ENCODE measurements at regions of chr2 and their contacts with region 1.

Region 1: DNA sequence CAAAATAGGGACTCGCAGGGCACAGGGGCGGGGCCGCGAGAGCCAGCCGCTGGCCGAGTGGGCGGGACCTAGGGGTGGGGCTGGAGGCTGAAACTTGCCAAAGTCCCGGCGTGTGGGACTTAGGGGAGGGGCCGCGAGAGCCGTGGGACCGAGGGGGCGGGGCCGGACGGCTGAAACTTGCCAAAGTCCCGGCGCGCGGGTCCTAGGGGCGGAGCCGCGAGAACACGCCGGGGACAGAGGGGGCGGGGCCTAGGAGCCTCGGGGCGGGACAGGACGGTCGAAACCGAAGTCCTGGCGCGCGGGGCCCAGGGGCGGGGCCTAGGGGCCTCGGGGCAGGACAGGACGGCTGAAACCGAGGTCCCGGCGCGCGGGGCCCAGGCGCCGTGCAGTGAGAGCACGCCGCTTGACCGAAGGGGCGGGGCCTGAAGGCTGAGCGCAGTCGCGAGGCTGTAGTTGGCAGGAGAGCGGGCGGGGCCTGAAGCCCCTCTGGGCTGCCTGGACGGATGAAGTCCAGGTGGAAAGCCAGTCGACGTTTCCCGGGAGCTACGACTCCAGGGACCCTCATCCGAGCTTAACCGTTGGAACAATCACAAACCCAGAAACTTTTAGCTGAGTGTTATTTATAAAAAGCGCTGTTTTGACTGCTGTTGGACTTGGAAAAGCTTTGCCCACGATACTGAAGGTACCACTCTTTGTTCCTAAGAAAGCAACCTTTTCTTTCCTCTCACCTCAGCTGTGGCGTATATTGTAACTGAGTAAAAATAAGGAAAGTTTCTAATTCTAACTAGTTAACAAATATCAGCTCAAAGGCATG is 475 bp upstream of the BARD1 start:
- DNase-seq: peak; percentile 87
- ATAC-seq: peak; percentile 88
- H3K4me3 ChIP-seq: peak overlapping the region; percentile 81
- H3K27ac ChIP-seq: peak overlapping the region; percentile 72
- H3K4me1 ChIP-seq: 0 out of 2 replicates have a peak, but pooled peaks cover 5% of the 10 kb centered on the region
- H3K27me3 ChIP-seq: no peaks in the 10 kb centered on the region
- CTCF ChIP-seq: no peak
- EP300 ChIP-seq: no peak
- POLR2A ChIP-seq: peak; percentile 76
- RAD21 ChIP-seq: no peak

Region 2: DNA sequence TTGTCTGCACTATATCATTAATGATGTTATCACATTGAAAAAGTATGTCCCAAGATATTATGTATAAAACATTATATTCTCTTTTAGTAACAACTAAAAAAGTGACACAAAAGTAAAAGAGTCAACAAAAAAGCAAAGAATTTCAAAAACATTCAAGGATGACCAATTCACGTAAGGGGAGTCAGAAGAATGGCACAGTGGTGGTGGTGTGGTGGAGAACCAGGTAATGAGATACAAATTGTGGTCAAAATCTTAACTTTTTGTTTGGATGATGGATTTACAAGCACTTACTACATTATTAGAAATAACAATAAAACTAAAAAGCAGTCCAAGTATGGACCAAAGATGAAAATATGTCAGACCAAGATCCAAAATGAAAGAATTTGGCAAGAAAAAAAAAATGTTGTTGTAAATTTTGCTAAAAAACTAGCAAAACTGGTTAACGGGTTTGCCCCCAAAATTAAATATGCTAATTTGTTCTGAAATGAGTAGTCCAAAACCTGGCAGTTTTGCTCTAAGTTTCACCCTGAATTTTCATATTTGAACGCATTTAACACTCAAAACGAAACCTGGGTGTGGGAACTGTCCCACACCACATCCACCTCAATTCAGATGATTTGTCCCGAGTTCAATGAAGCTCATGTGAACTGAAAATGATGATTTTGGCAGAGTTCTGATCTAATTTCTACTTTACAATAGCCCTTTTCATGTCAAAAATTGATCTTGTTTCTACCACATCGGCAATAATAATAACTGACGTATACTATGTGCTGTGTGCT is 1794.4 kb before region 1 on chr2:
- CTCF ChIA-PET with region 1: no interaction called
- POLR2A ChIA-PET with region 1: no interaction called
- RAD21 ChIA-PET with region 1: no interaction called
- SMC1A ChIA-PET with region 1: no interaction called
- in situ Hi-C with region 1: no loop called
- intact Hi-C with region 1: loop called (anchors 5 kb)
- DNase-seq: peak; percentile 98
- ATAC-seq: peak; percentile 55
- H3K4me3 ChIP-seq: peak overlapping the region; percentile 65
- H3K27ac ChIP-seq: peak overlapping the region; percentile 96
- H3K4me1 ChIP-seq: peaks cover 20% of the 10 kb centered on the region
- H3K27me3 ChIP-seq: no peaks in the 10 kb centered on the region
- CTCF ChIP-seq: no peak
- EP300 ChIP-seq: peak; percentile 92 to 93
- POLR2A ChIP-seq: no peak
- RAD21 ChIP-seq: no peak

Region 3: DNA sequence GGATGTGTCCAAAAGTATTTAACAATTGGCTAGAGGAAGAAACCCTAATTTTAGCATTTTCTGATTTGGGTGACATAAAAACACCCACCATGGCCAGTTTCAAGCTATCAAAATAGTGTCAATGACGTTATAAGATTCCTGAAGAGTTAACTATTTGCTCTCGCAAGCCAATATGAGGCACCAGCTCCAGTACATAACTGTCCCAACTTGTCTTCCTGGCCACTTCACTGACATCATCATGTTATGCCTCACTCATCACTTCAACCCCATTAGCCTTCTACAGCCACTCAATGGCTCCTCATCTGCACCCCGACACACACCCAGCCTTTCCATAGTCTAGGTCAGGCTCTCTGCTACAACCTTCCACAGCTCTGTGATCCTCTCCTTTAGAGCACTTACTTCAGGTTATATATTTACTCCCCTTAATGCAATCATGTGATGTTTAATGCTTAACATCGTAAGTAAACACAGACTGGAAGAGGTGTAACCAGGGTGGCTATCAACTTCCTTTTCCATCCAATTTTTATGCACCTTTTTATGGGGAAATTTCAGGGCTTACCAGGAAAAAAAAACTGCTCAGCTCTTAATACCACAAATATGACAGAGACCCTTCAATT is 240.4 kb before region 1 on chr2:
- CTCF ChIA-PET with region 1: no interaction called
- POLR2A ChIA-PET with region 1: no interaction called
- RAD21 ChIA-PET with region 1: no interaction called
- SMC1A ChIA-PET with region 1: no interaction called
- in situ Hi-C with region 1: no loop called
- intact Hi-C with region 1: loop called (anchors 5 kb)
- DNase-seq: no peak
- ATAC-seq: no peak
- H3K4me3 ChIP-seq: no peak overlapping the region
- H3K27ac ChIP-seq: no peak overlapping the region
- H3K4me1 ChIP-seq: no peaks in the 10 kb centered on the region
- H3K27me3 ChIP-seq: no peaks in the 10 kb centered on the region
- CTCF ChIP-seq: no peak
- EP300 ChIP-seq: no peak
- POLR2A ChIP-seq: no peak
- RAD21 ChIP-seq: no peak

Region 4: DNA sequence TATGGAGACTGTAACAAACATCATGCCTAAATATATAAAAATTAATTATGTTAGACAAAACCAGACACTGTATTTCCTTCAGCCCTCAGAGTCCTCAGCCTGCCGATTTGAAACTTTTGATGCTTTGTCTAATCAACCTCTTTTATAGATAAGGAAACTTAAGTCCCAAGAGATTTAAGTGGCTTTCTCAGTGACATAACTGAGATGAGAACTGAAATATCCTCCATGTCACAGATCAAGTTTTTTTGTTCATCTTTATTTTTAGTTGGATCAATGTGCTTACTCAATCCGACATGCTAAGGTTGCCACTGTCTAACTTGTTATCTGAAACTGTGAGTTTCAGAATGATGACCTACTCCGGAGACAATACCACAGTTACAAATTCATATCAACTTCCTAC is 72.8 kb before region 1 on chr2:
- CTCF ChIA-PET with region 1: interaction called, 5 read pairs
- POLR2A ChIA-PET with region 1: interaction called, 22 read pairs
- RAD21 ChIA-PET with region 1: interaction called, 59 read pairs
- SMC1A ChIA-PET with region 1: interaction called, 8 read pairs
- in situ Hi-C with region 1: no loop called
- intact Hi-C with region 1: loop called (anchors 2 kb)
- DNase-seq: peak; percentile 92
- ATAC-seq: peak; percentile 88
- H3K4me3 ChIP-seq: no peak overlapping the region
- H3K27ac ChIP-seq: peak overlapping the region; percentile 89
- H3K4me1 ChIP-seq: peaks cover 12% of the 10 kb centered on the region
- H3K27me3 ChIP-seq: no peaks in the 10 kb centered on the region
- CTCF ChIP-seq: no peak
- EP300 ChIP-seq: peak; percentile 97 to 98; a peak in 3 of 4 replicates
- POLR2A ChIP-seq: no peak
- RAD21 ChIP-seq: no peak

Region 5: DNA sequence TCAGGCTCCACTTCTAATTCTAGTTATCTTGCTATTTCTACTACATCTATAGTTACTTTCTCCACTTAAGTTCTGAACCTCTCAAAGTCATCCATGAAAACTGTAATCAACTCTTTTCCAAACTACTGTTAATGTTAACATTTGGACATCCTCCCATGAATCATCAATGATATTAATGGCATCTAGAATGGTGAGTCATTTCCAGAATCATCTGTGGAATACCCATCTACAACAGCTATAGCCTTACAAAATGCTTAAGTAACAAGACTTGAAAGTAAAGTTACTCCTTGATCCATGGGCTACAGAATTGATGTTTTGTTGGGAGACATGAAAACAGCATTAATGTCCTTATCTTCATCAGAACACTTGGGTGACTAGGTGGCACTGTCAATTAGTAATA is 35.9 kb before region 1 on chr2:
- CTCF ChIA-PET with region 1: no interaction called
- POLR2A ChIA-PET with region 1: interaction called, 3 read pairs
- RAD21 ChIA-PET with region 1: no interaction called
- SMC1A ChIA-PET with region 1: interaction called, 17 read pairs
- in situ Hi-C with region 1: no loop called
- intact Hi-C with region 1: no loop called
- DNase-seq: no peak
- ATAC-seq: no peak
- H3K4me3 ChIP-seq: no peak overlapping the region
- H3K27ac ChIP-seq: no peak overlapping the region
- H3K4me1 ChIP-seq: no peaks in the 10 kb centered on the region
- H3K27me3 ChIP-seq: no peaks in the 10 kb centered on the region
- CTCF ChIP-seq: no peak
- EP300 ChIP-seq: no peak
- POLR2A ChIP-seq: no peak
- RAD21 ChIP-seq: no peak

Region 6: GRCh38 chr2:214995926-214996670 is 186.1 kb after region 1 on chr2:
- CTCF ChIA-PET with region 1: no interaction called
- POLR2A ChIA-PET with region 1: no interaction called
- RAD21 ChIA-PET with region 1: interaction called, 6 read pairs
- SMC1A ChIA-PET with region 1: interaction called, 9 read pairs
- in situ Hi-C with region 1: no loop called
- intact Hi-C with region 1: loop called (anchors 1 kb)
- DNase-seq: peak; percentile 85
- ATAC-seq: peak; percentile 96
- H3K4me3 ChIP-seq: 0 out of 2 replicates have a peak overlapping the region, but pooled peaks have one; percentile 21
- H3K27ac ChIP-seq: peak overlapping the region; percentile 89
- H3K4me1 ChIP-seq: peaks cover 20% of the 10 kb centered on the region
- H3K27me3 ChIP-seq: no peaks in the 10 kb centered on the region
- CTCF ChIP-seq: no peak
- EP300 ChIP-seq: peak; percentile 70 to 82; a peak in 2 of 4 replicates
- POLR2A ChIP-seq: no peak
- RAD21 ChIP-seq: no peak

Measured in GM12878 (cell line).